CD14-positive monocyte (primary cell): ENCODE measurements at regions of chr10 and their contacts with region 1.

Region 1: GRCh38 chr10:44706745-44707144 is 204.4 kb upstream of the TMEM72 start:
- DNase-seq: no peak
- H3K4me3 ChIP-seq: no peak overlapping the region
- H3K4me3 Mint-ChIP-seq: no peak overlapping the region
- H3K27ac ChIP-seq: no peak overlapping the region
- H3K27ac Mint-ChIP-seq: no peak overlapping the region
- H3K4me1 ChIP-seq: no peaks in the 10 kb centered on the region
- H3K4me1 Mint-ChIP-seq: peaks cover 4% of the 10 kb centered on the region
- H3K27me3 ChIP-seq: no peaks in the 10 kb centered on the region
- H3K27me3 Mint-ChIP-seq: peaks cover 0 to 2% (median 0%) of the 10 kb centered on the region in 3 donors
- CTCF ChIP-seq: no peak

Region 2: GRCh38 chr10:44673245-44673983 is 33.3 kb before region 1 on chr10:
- intact Hi-C with region 1: no loop called
- DNase-seq: no peak
- H3K4me3 ChIP-seq: no peak overlapping the region
- H3K4me3 Mint-ChIP-seq: no peak overlapping the region
- H3K27ac ChIP-seq: no peak overlapping the region
- H3K27ac Mint-ChIP-seq: no peak overlapping the region
- H3K4me1 ChIP-seq: no peaks in the 10 kb centered on the region
- H3K4me1 Mint-ChIP-seq: no peaks in the 10 kb centered on the region
- H3K27me3 ChIP-seq: no peaks in the 10 kb centered on the region
- H3K27me3 Mint-ChIP-seq: peaks cover 1 to 5% (median 4%) of the 10 kb centered on the region in 3 donors
- CTCF ChIP-seq: no peak

Region 3: DNA sequence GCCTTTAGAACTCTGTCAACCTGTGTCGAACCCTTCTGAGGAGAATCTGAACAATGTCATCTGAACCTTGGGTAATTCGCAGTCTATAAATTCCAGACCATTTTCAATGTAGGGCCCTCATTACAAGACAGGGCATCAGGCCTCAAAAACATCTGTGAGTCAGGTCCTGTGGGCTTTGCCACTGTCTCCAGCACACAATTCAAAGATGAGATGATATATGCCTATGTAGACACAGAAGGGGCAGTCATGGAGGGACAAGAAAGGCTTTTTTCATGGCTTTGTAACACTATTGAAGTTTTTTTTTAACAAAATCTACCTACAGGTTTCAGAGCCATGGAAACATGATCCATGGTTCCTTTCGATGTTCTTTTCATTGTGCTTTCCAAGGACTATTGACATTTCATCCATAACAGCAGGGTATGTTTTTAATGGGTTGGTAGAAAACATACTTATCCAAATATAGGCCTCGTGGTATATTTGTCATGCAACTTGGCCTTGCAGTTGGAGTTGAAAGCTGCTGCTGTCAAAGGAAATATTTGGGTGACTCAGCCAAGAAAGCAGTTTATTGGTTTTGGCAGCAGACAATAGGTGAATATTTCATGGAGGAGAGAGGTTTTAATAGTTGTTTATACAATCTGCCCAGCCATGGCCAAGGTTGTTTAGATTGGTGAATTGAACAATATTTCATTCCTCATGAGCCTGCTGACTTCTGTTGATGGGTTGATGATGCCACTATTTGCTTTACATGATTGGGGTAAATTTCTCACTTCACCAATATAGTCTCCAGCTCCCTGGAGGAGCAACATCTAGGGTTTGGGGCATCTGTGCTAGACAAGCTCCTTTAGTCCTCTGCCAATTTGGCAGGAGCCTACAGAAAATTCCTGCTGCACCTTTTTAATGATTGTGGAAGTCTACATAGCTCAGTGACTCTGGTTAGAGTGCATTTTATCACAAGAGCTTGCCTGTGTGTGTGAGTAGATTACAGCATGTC is 46.0 kb after region 1 on chr10:
- intact Hi-C with region 1: loop called in 1 of 2 experiments (anchors 10 kb)
- DNase-seq: no peak
- H3K4me3 ChIP-seq: no peak overlapping the region
- H3K4me3 Mint-ChIP-seq: no peak overlapping the region
- H3K27ac ChIP-seq: no peak overlapping the region
- H3K27ac Mint-ChIP-seq: no peak overlapping the region
- H3K4me1 ChIP-seq: no peaks in the 10 kb centered on the region
- H3K4me1 Mint-ChIP-seq: no peaks in the 10 kb centered on the region
- H3K27me3 ChIP-seq: no peaks in the 10 kb centered on the region
- H3K27me3 Mint-ChIP-seq: peaks cover 0 to 4% (median 2%) of the 10 kb centered on the region in 3 donors
- CTCF ChIP-seq: no peak

Region 4: GRCh38 chr10:45034301-45034700 is 327.6 kb after region 1 on chr10:
- intact Hi-C with region 1: no loop called
- DNase-seq: no peak
- H3K4me3 ChIP-seq: no peak overlapping the region
- H3K4me3 Mint-ChIP-seq: no peak overlapping the region
- H3K27ac ChIP-seq: no peak overlapping the region
- H3K27ac Mint-ChIP-seq: peak overlapping the region in 1 of 7 donors; percentile 50
- H3K4me1 ChIP-seq: no peaks in the 10 kb centered on the region
- H3K4me1 Mint-ChIP-seq: no peaks in the 10 kb centered on the region
- H3K27me3 ChIP-seq: no peaks in the 10 kb centered on the region
- H3K27me3 Mint-ChIP-seq: peaks cover 0 to 5% (median 0%) of the 10 kb centered on the region in 3 donors
- CTCF ChIP-seq: no peak